A549 (cell line): ENCODE measurements at regions of chr19 and their contacts with region 1.

Region 1: DNA sequence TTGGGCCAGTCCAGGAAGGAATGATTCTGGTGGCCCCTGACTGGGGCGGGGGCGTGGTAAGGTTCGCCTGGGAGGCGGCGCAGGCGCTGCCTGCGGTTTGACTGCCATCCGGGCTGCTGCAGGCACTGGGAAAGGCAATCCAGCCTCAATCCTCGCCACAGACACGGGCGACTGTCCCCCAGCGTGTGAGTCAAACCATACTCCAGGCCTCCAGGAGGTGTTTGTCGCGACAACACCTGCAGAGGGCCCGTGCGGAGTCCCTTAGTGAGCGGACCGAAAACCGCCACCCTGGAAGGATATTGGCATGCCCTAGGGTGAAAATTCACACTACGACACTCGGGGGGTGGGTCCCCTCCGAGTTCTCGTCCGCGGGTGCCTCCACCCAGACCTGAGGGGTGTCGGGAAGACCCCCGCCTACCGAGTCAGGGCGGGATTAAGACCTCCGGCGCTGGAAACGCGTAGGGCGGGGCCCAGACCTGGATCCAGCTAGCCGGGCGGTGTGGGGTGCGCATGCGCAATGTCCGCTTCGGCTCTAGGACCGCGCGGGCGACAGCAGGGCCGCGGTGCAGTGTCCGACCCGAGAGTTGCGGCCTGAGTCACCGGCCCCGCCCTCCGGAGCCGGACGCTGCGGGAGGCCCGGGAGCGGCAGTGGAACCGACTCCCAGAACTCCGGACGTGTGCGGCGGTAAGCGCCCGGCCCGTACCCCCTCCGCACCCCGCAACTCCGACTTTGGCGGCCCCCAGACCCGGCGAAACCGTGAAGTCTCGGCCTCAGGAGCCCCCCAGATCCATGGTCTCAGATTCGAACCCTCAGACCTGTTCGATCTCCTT is at the start of gene CAPNS1:
- DNase-seq: peak; percentile 99
- ATAC-seq: peak; percentile 77 to 85
- H3K4me3 ChIP-seq: peak within 1 kb of the TSS; percentile 75
- H3K27ac ChIP-seq: peak within 1 kb of the TSS; percentile 93 to 95
- H3K4me1 ChIP-seq: peaks cover 37% of the 10 kb centered on the region
- CTCF ChIP-seq: peak; percentile 17; the same call in 1 of the 3 replicates
- EP300 ChIP-seq: no peak; a peak in 1 of 5 replicates
- POLR2A ChIP-seq: peak; percentile 83
- RAD21 ChIP-seq: peak in 1 of 2 experiments; percentile 7; a peak in 1 of 5 replicates
- polyA plus RNA-seq, gene CAPNS1: 1,014 and 1,236 TPM in 2 replicates

Region 2: GRCh38 chr19:36054119-36054732 is 85.5 kb before region 1 on chr19 and contains the start of gene THAP8:
- CTCF ChIA-PET with region 1: interaction called, 3 read pairs
- POLR2A ChIA-PET with region 1: interaction called, 11 read pairs
- DNase-seq: peak; percentile 100
- ATAC-seq: peak; percentile 82 to 88
- H3K4me3 ChIP-seq: peak within 1 kb of the TSS; percentile 84
- H3K27ac ChIP-seq: peak within 1 kb of the TSS; percentile 89 to 93
- H3K4me1 ChIP-seq: peaks cover 22% of the 10 kb centered on the region
- CTCF ChIP-seq: peak; percentile 54
- EP300 ChIP-seq: no peak; a peak in 1 of 5 replicates
- POLR2A ChIP-seq: peak; percentile 93
- RAD21 ChIP-seq: peak in 1 of 2 experiments; percentile 17; a peak in 2 of 5 replicates
- polyA plus RNA-seq, gene THAP8: 3.1 and 3.2 TPM in 2 replicates

Region 3: DNA sequence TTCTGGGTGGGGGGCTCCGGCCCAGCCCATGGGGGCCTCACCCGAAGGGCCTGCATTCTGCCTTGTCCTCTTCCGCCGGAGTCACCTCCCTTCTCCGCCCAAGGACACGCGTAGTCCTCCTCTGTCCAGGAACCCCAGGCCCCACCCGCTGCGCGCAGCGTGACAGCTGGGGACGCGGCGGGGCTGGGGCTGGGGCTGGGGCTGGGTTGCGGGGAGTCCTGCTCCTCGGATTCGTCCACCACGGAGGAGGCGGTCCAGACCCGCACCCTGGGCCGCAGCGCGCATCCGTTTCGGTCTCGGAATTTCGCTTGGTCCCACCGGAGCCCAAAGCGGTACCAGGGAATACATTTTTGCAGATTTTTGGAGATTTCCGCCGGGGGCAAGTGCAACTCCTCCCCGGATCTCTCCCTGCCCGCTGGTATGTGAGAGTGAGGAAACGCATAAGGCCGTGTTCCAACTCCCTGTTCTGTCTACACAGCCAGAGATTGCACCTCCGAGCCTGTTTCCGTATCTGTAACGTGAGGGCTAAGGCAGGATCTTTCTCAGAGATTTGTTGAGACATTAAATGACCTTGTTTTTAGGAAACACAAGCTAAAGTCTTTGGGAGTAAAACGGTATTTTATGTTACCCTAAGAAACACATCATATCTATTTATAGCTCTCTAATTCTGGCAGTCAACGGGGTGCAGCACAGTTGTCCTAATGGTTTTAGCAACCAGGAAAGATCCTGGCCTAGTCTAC is 12.8 kb after region 1 on chr19 and contains the start of gene COX7A1:
- CTCF ChIA-PET with region 1: interaction called, 13 read pairs
- POLR2A ChIA-PET with region 1: interaction called, 5 read pairs
- DNase-seq: no peak
- ATAC-seq: peak in 1 of 2 experiments; percentile 5; a peak in 1 of 6 replicates
- H3K4me3 ChIP-seq: no peak within 1 kb of the TSS
- H3K27ac ChIP-seq: no peak within 1 kb of the TSS
- H3K4me1 ChIP-seq: no peaks in the 10 kb centered on the region
- CTCF ChIP-seq: no peak
- EP300 ChIP-seq: no peak
- POLR2A ChIP-seq: no peak
- RAD21 ChIP-seq: no peak
- polyA plus RNA-seq, gene COX7A1: not detected in 2 replicates

Region 4: GRCh38 chr19:36169084-36169760 is 29.5 kb after region 1 on chr19:
- CTCF ChIA-PET with region 1: interaction called, 75 read pairs
- POLR2A ChIA-PET with region 1: interaction called, 4 read pairs
- DNase-seq: no peak
- ATAC-seq: no peak
- H3K4me3 ChIP-seq: no peak overlapping the region
- H3K27ac ChIP-seq: no peak overlapping the region
- H3K4me1 ChIP-seq: 0 out of 3 replicates have a peak, but pooled peaks cover 3% of the 10 kb centered on the region
- CTCF ChIP-seq: no peak
- EP300 ChIP-seq: no peak
- POLR2A ChIP-seq: no peak
- RAD21 ChIP-seq: no peak